ENCODE measurements at regions of chr17 and their contacts with region 1.

Region 1: GRCh38 chr17:42112552-42113176 is at the start of gene DHX58:
- DNase-seq: peak; percentile 81 to 96
- H3K4me3 ChIP-seq: peak within 1 kb of the TSS; percentile 53 to 65 (median 60)
- H3K27ac ChIP-seq: peak within 1 kb of the TSS; percentile 92 to 96 (median 92)
- H3K4me1 ChIP-seq: peaks cover 18 to 45% (median 35%) of the 10 kb centered on the region in 4 donors
- H3K27me3 ChIP-seq: no peaks in the 10 kb centered on the region
- CTCF ChIP-seq: peak in 1 of 7 experiments; percentile 13
- EP300 ChIP-seq: no peak
- POLR2A ChIP-seq: no peak
- total RNA-seq, gene DHX58: 3.2 to 21.9 (median 9.8) TPM

Region 2: DNA sequence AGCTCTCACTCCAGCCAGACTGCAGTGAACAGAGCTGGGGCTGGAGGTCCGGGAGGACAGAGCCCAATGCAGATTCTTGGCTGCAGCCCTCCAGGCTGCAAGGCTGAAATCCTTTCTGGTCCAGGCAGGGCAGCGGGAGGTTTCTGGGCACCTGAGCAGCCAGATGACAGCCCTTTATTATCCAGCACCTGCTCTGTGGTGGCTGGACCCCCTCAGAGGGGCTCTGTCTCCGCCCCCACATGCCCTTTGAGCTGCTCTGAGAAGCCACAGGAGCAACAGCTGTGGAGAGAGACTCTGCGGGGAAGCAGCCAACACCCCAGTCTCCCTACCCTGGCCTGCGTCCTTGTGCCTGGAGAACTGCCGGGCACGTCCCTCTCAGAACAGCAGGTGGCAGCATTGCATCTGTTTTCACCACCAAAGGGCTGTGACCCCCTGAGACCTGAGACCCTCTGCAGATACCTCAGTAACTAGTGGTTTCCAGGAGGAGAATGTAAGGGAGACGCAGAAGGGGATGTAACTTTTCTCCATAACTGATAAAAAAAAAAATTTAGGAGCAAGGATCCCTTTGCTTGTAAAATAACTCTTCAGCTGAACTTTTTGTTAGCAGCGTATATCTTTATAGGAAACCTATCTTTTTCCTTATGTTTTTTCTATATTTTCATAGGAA is 149.8 kb before region 1 on chr17:
- intact Hi-C with region 1: loop called (anchors 5 kb)
- DNase-seq: peak; percentile 80 to 92
- H3K4me3 ChIP-seq: no peak overlapping the region
- H3K27ac ChIP-seq: no peak overlapping the region
- H3K4me1 ChIP-seq: peaks cover 16 to 25% (median 24%) of the 10 kb centered on the region in 4 donors
- H3K27me3 ChIP-seq: no peaks in the 10 kb centered on the region
- CTCF ChIP-seq: peak in 5 of 7 experiments; percentile 64 to 90 (median 82)
- EP300 ChIP-seq: no peak
- POLR2A ChIP-seq: no peak

Region 3: DNA sequence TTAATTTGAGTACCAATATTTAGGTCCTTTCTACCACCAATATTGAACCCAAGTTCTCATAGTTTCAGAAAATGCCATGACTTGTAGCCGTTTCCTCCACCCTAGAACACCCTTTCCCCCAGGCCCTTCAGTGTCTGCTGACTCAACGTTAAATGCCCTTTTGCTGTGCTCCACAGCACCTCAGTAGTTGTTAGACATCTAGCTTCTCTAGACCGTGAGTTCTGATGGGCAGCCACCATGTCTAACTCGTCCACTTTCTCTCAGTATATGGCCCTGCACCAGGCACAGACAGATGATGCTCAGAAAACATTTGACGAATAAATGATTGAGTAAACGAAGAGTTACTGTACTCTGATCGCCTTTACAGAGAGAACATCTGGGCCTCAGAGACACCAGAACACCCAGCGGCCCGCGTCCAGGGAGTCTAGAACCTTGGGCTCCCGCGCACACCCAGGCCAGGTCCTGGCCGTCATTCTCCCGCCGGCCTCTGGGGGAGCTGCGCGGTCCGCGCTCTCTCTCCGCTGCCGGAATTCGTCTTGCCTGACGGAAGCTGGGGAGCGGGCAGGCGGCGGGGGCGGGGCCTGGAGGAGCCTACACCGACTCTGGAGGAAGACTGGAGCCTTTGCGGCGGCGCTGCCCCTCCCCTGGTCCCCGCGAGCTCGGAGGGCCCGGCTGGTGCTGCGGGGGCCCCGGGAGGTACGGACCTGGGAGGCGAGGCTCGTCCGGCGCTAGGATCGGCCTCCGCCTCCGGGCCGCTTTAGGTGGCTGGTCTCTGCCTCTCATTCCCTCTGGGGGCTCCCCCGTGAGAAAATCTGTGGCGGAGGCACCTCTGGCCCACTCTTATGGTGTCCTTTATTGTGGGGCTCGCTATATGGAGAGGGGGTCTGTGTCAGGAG is 92.9 kb before region 1 on chr17 and contains the start of gene NKIRAS2:
- intact Hi-C with region 1: loop called (anchors 5 kb)
- DNase-seq: peak; percentile 95 to 97
- H3K4me3 ChIP-seq: peak within 1 kb of the TSS; percentile 74 to 97 (median 82)
- H3K27ac ChIP-seq: peak within 1 kb of the TSS; percentile 81 to 91 (median 90)
- H3K4me1 ChIP-seq: peaks cover 48 to 70% (median 59%) of the 10 kb centered on the region in 4 donors
- H3K27me3 ChIP-seq: no peaks in the 10 kb centered on the region
- CTCF ChIP-seq: peak in 5 of 7 experiments; percentile 93 to 97 (median 94)
- EP300 ChIP-seq: no peak
- POLR2A ChIP-seq: no peak
- total RNA-seq, gene NKIRAS2: 7.5 to 27.4 (median 19.6) TPM

Region 4: DNA sequence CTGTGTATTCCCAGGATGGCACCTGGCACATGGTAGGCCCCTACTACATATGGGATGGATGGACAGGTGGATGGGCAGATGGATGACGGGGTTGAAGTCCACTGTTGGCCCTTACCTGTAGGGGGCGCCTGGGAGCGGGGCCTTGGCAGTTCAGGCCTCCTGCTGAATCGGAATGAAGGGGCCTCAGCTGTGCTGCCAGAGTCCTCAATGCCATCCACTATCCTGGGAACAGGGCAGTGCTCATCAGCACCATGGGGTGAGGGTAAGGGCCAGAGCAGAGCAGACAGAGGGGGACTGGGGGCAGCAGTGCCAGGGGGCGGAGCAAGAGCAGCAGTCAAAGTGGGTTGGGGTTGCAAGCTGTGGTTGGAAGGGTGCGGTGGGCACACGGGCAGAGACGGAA is 50.4 kb after region 1 on chr17:
- intact Hi-C with region 1: no loop called
- DNase-seq: no peak
- H3K4me3 ChIP-seq: no peak overlapping the region
- H3K27ac ChIP-seq: no peak overlapping the region
- H3K4me1 ChIP-seq: no peaks in the 10 kb centered on the region
- H3K27me3 ChIP-seq: no peaks in the 10 kb centered on the region
- CTCF ChIP-seq: peak in 1 of 7 experiments; percentile 3
- EP300 ChIP-seq: no peak
- POLR2A ChIP-seq: no peak

Region 5: DNA sequence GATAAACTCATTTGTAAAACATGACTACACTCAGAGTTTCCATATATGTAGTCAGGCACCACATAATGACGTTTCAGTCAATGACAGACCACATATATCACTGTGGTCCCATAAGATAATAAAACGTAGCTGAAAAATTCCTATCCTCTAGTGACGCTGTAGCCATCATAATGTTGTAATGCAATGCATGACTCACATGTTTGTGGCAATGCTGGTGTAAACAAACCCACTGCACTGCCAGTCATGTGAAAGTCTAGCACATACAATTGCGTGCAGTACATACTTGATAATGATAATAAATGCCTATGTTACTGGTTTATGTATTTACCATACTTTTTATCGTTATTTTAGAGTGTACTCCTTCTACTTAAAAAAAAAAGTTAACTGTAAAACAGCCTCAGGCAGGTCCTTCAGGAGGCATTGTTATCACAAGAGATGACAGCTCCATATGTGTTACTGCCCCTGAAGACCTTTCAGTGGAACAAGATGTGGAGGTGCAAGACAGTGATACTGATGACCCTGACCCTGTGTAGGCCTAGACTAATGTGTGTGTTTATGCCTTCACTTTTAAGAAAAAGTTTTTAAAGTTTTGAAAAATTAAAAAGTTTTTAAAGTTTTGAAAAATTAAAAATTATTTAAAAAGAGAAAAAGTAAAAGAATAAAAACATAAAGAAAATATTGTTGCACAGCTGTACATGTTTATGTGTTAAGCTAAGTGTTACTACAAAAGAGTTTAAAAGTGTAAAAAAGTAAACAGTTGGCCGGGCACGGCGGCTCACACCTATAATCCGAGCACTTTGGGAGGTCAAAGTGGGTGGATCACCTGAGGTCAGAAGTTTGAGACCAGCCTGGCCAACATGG is 154.5 kb after region 1 on chr17:
- intact Hi-C with region 1: no loop called
- DNase-seq: peak in 1 of 2 donors; percentile 36
- H3K4me3 ChIP-seq: no peak overlapping the region
- H3K27ac ChIP-seq: peak overlapping the region in 3 of 5 donors; percentile 37 to 55 (median 48)
- H3K4me1 ChIP-seq: peaks cover 0 to 55% (median 27%) of the 10 kb centered on the region in 4 donors
- H3K27me3 ChIP-seq: no peaks in the 10 kb centered on the region
- CTCF ChIP-seq: no peak
- EP300 ChIP-seq: no peak
- POLR2A ChIP-seq: no peak

Region 6: DNA sequence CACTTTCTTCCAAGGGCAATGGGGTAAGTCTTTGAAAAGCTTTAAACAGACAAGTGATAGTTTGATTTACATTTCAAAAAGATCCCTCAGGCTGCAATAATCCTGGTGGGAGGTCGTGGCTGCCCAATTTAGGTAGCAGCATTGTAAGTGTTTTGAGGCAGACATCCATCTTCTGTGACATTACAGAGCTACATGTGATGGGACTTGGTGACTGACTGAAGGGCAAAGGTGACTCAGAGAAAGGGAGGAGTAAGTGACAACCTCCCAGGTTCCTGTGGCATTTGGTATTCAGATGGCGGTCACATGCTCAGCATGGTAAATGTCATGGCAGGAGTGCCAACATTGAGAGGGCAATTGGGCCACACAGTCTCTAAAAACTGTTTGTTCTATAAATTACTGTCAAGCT is 249.1 kb after region 1 on chr17:
- intact Hi-C with region 1: no loop called
- DNase-seq: no peak
- H3K4me3 ChIP-seq: no peak overlapping the region
- H3K27ac ChIP-seq: peak overlapping the region in 2 of 5 donors; percentile 0 to 16
- H3K4me1 ChIP-seq: peaks cover 37 to 89% (median 75%) of the 10 kb centered on the region in 4 donors
- H3K27me3 ChIP-seq: no peaks in the 10 kb centered on the region
- CTCF ChIP-seq: no peak
- EP300 ChIP-seq: no peak
- POLR2A ChIP-seq: no peak

Measured in stomach (tissue), 19 donors.